ENCODE measurements at regions of chr11 and their contacts with region 1.

Region 1: DNA sequence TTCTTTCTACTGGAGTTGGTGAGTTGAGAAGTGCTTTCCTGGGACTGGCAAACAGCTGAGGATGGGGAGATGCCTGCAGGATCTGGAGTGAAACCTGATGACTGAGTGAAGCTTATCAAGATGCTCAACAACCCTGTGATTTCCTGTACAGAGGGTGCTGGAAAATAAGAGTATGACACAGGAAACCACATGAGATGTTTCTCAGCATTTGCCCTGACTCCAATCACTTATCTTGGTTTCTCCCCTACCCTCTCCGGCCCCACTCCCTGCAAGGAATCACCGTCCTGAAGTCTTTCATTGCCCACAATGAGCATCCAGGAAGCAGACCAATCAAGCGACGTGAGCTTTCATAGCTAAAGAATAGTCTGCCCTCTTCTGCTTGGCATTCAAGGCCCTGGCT is at the start of gene MRGPRX2:
- DNase-seq: peak in 2 of 9 experiments; percentile 25 to 57
- ATAC-seq: no peak
- H3K4me3 ChIP-seq: no peak within 1 kb of the TSS
- H3K4me3 Mint-ChIP-seq: no peak within 1 kb of the TSS
- H3K27ac ChIP-seq: peak within 1 kb of the TSS in 1 of 2 experiments; percentile 36
- H3K27ac Mint-ChIP-seq: no peak within 1 kb of the TSS
- H3K4me1 ChIP-seq: peaks cover 17% of the 10 kb centered on the region
- H3K4me1 Mint-ChIP-seq: peaks cover 18% of the 10 kb centered on the region
- H3K27me3 ChIP-seq: no peaks in the 10 kb centered on the region
- H3K27me3 Mint-ChIP-seq: peaks cover 7% of the 10 kb centered on the region
- CTCF ChIP-seq: no peak
- total RNA-seq, gene MRGPRX2: not detected

Region 2: DNA sequence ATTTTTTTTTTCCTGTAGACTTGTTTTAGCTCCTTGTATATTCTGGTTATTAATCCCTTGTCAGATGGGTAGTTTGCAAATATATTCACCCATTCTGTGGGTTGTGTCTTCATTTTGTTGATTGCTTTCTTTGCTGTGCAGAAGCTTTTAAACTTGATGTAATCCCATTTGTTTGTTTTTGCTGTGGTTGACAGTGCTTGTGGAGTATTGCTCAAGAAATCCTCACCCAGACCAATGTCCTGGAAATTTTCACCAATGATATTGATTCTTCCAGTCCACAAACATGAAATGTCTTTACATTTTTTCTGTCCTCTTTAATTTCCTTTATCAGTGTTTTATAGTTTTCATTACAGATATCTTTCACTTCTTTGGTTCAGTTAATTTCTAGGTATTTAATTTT is 65.8 kb before region 1 on chr11:
- CTCF ChIA-PET with region 1: no interaction called
- POLR2A ChIA-PET with region 1: no interaction called
- intact Hi-C with region 1: no loop called
- DNase-seq: no peak
- ATAC-seq: no peak
- H3K4me3 ChIP-seq: no peak overlapping the region
- H3K4me3 Mint-ChIP-seq: no peak overlapping the region
- H3K27ac ChIP-seq: no peak overlapping the region
- H3K27ac Mint-ChIP-seq: no peak overlapping the region
- H3K4me1 ChIP-seq: no peaks in the 10 kb centered on the region
- H3K4me1 Mint-ChIP-seq: no peaks in the 10 kb centered on the region
- H3K27me3 ChIP-seq: no peaks in the 10 kb centered on the region
- H3K27me3 Mint-ChIP-seq: peaks cover 2% of the 10 kb centered on the region
- CTCF ChIP-seq: no peak

Region 3: DNA sequence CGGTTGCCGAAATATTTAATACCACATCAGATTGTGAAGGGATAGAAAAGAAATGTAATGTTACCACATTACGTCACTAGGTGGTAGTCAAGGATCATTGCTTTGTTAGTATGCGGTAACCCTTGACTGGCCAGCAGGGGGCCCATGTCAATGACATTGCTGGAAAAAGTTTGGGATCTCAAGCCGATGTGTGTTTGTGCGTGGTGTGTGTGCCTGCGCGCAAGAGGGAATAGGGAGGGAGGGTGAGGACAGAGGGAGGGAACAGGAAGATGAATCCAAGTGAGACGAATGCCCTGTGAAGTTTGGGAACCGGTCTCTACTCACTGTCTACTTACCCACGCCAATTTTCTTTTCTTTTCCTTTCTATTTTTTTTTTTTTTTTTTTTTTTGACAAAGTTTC is 10.6 kb after region 1 on chr11:
- CTCF ChIA-PET with region 1: interaction called, 23 read pairs
- POLR2A ChIA-PET with region 1: interaction called, 4 read pairs
- intact Hi-C with region 1: no loop called
- DNase-seq: peak in 8 of 9 experiments; percentile 15 to 81 (median 46)
- ATAC-seq: peak; percentile 90
- H3K4me3 ChIP-seq: no peak overlapping the region
- H3K4me3 Mint-ChIP-seq: peak overlapping the region; percentile 38
- H3K27ac ChIP-seq: no peak overlapping the region
- H3K27ac Mint-ChIP-seq: no peak overlapping the region
- H3K4me1 ChIP-seq: peaks cover 4% of the 10 kb centered on the region
- H3K4me1 Mint-ChIP-seq: peaks cover 5% of the 10 kb centered on the region
- H3K27me3 ChIP-seq: no peaks in the 10 kb centered on the region
- H3K27me3 Mint-ChIP-seq: peaks cover 18% of the 10 kb centered on the region
- CTCF ChIP-seq: peak; percentile 90

Region 4: GRCh38 chr11:19076744-19077589 is 16.3 kb after region 1 on chr11:
- CTCF ChIA-PET with region 1: interaction called, 23 read pairs
- POLR2A ChIA-PET with region 1: no interaction called
- intact Hi-C with region 1: no loop called
- DNase-seq: peak; percentile 20 to 68 (median 59)
- ATAC-seq: peak; percentile 61
- H3K4me3 ChIP-seq: no peak overlapping the region
- H3K4me3 Mint-ChIP-seq: no peak overlapping the region
- H3K27ac ChIP-seq: no peak overlapping the region
- H3K27ac Mint-ChIP-seq: no peak overlapping the region
- H3K4me1 ChIP-seq: no peaks in the 10 kb centered on the region
- H3K4me1 Mint-ChIP-seq: peaks cover 3% of the 10 kb centered on the region
- H3K27me3 ChIP-seq: no peaks in the 10 kb centered on the region
- H3K27me3 Mint-ChIP-seq: peaks cover 14% of the 10 kb centered on the region
- CTCF ChIP-seq: peak; percentile 99